Activated CD4-positive, alpha-beta T cell treated with anti-CD3 and anti-CD28 coated beads, Interleukin-2, amount 10 ng/mL, durations not matched to agents 24 days and 14 days (primary cell): ENCODE measurements at regions of chr10 and their contacts with region 1.

Region 1: DNA sequence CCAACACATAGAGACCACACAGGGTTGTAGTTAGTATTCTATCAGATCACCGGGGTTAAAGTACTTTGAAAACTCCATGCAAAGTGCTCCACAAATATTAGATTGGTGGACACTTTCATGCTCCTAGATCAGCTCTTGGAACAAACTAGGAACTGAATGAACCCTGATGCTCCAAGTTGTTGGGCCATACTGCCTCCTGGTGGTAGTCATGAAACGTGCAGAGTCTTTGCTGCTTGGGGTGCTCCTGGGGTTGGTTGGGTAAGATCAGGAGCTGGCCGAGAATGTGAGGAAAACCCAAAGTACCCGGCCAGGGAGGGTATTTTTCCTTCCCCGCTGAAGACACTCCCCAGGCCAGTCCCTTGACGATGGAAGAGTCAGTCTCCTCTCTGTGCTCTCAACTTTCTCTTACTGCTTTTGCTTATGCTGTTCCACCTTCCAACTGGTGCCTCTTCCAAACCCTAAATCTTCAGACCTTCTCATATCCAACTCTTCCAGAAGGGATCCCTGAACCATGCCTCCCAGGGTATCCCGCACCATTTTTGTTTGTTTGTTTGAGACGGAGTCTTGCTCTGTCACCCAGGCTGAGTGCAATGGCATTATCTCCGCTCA is 920 bp upstream of the RPEL1 start:
- DNase-seq: peak; percentile 89
- H3K4me3 Mint-ChIP-seq: no peak overlapping the region
- H3K27ac Mint-ChIP-seq: no peak overlapping the region
- H3K4me1 Mint-ChIP-seq: peaks cover 19% of the 10 kb centered on the region
- H3K27me3 Mint-ChIP-seq: peaks cover 18% of the 10 kb centered on the region

Region 2: GRCh38 chr10:103069453-103070331 is 175.1 kb before region 1 on chr10:
- intact Hi-C with region 1: loop called (anchors 1 kb)
- DNase-seq: peak; percentile 91
- H3K4me3 Mint-ChIP-seq: peak overlapping the region; percentile 35
- H3K27ac Mint-ChIP-seq: peak overlapping the region; percentile 75
- H3K4me1 Mint-ChIP-seq: peaks cover 28% of the 10 kb centered on the region
- H3K27me3 Mint-ChIP-seq: no peaks in the 10 kb centered on the region

Region 3: GRCh38 chr10:103096153-103096552 is 148.6 kb before region 1 on chr10:
- intact Hi-C with region 1: loop called (anchors 10 kb)
- DNase-seq: no peak
- H3K4me3 Mint-ChIP-seq: no peak overlapping the region
- H3K27ac Mint-ChIP-seq: peak overlapping the region; percentile 29
- H3K4me1 Mint-ChIP-seq: peaks cover 2% of the 10 kb centered on the region
- H3K27me3 Mint-ChIP-seq: no peaks in the 10 kb centered on the region

Region 4: DNA sequence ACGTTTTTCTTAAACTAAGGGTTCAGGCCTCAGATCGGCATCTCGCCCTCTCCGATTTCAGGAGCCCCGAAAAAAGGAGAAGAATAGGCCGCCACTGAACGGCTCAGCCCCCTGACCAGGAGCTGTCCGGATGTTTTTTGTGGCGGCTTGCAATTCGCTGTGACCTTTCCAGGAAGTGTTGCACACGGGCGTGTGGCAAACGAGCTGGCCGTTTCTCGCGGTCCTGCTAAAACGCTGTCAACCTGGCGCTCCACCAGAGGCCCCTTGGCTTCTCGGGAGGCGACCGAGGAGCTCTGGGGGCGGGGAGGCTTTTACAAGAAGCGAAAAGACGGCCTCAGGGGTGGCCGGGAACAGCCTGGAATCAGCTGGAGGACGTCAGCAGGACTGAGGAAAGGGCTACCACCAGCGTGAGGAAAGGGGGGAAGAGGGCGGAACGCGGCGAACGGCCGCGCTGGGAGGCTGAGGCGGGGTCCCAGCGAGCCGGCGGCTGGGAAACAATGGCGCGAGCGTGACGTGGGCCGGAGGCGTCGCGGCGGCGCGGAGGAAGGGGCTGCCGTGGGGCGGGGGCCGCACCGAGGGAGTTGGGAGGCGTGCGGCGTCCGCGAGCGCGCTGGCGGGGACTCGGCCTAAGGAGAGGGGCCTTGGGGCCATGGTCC is 52.2 kb before region 1 on chr10:
- intact Hi-C with region 1: loop called (anchors 1 kb)
- DNase-seq: peak; percentile 91
- H3K4me3 Mint-ChIP-seq: peak overlapping the region; percentile 100
- H3K27ac Mint-ChIP-seq: peak overlapping the region; percentile 99
- H3K4me1 Mint-ChIP-seq: peaks cover 31% of the 10 kb centered on the region
- H3K27me3 Mint-ChIP-seq: no peaks in the 10 kb centered on the region

Region 5: DNA sequence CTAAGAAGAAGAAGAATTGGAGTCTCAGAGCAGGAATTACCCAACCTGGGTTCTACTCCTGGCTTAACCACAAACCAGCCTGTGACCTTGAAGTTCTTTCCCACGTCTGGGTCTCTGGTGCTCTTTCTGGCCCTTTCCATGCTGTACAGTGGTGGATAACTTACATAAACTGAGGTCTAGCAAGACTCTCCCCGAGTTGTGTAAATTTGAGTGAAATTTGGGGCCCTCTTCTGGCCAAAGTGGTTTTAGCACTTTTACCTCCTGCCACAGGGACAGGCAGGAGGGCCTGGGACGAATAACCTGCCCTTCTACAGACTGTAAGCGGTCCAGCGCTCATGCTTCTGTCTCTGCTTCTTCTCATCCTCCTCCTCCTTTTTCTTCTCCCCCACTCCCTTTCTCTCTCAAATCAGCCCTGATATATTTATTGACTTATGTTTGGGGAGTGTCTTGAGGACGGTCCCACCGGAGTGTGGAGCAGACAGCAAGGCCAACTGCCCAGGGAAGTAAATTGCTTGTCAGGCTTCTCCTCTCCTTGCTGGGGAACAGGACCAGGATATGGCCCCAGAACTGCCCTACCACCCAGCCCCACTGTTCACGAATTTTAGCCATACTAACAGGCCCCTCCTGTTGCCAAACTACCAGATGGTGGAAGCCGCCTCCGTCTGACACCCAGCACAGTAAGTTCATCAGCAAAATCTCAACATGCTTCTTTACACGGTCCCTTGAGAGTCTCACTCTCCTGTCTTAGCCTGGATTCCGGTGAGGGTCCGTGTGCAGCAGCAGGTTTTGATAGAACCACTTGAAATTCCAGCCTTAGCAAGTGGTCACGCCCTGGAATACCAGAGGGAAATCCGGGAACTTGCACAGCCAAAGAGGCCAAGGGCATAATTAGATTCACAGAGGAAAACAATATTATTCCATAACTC is 614.7 kb after region 1 on chr10:
- intact Hi-C with region 1: no loop called
- DNase-seq: peak; percentile 89
- H3K4me3 Mint-ChIP-seq: no peak overlapping the region
- H3K27ac Mint-ChIP-seq: no peak overlapping the region
- H3K4me1 Mint-ChIP-seq: peaks cover 6% of the 10 kb centered on the region
- H3K27me3 Mint-ChIP-seq: peaks cover 45% of the 10 kb centered on the region